GM12878 (cell line): ENCODE measurements at regions of chr9 and their contacts with region 1.

Region 1: DNA sequence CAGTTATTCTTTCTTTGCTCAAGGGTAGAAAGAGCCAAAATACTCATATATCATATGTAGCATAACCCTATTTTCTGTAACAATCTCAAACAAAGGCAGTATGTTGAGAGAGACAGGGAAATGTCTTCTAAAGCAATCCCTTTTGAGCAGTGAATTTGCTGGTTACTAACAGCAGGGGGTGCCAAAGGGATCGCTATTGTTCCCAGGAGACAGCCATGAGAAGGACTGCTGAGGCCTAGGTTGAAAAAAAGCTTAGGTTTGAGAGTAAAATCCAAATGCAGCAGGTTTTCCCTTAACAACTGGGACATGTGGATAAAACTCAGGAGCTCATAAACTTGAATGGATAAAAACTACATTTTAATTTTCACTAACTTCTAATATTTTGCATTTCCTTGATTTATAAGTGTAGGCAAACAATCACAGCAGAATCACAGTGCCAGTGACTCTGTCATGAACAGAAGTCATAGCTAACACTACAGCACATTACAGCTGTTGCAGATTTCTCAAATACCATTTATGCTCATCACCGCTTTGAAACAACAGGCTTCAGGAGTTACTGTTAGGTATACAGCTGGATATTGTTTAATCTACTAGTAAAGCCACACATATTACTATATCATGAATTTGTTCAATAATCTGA is 148.4 kb downstream of the MAPKAP1 start:
- DNase-seq: peak; percentile 33
- ATAC-seq: peak; percentile 79
- H3K4me3 ChIP-seq: no peak overlapping the region
- H3K27ac ChIP-seq: no peak overlapping the region; the same call in 1 of the 2 replicates
- H3K4me1 ChIP-seq: peaks cover 28% of the 10 kb centered on the region
- H3K27me3 ChIP-seq: no peaks in the 10 kb centered on the region
- CTCF ChIP-seq: peak; percentile 79 to 90 (median 86)
- EP300 ChIP-seq: no peak
- POLR2A ChIP-seq: no peak
- RAD21 ChIP-seq: peak; percentile 91

Region 2: DNA sequence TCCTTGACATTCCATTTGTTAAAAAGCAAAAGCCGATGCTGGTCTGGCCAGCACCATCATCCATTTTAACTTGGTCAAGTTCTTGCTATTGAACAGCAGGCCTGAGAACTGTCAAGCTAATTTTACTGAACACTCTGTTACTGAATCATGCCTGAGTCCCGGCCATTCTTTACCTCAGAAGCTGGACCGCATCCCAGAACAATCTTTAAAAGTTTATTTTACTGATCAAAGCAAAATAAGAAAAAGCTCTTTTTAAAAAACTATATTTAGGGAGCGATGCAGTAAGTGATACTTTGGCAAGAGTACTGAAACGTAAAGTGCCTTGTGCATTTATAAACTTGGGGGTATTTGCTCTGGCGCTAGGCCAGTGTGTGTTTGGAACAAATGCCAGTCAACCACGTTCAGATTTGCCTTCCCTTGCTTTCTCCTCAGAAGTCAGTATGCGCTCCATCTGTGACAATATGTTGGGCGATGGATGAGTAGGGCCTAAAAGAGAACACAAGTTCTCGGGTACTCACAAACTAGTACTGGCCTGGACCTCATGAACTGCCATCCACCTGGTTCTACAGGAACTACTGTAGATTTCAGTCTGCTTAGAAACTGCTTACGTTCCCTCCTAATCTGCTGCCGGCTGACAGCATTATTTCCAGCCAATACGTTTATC is 13.5 kb before region 1 on chr9:
- CTCF ChIA-PET with region 1: interaction called, 25 read pairs
- POLR2A ChIA-PET with region 1: no interaction called
- RAD21 ChIA-PET with region 1: interaction called, 3 read pairs
- SMC1A ChIA-PET with region 1: interaction called, 16 read pairs
- in situ Hi-C with region 1: no loop called
- intact Hi-C with region 1: no loop called
- DNase-seq: no peak
- ATAC-seq: no peak
- H3K4me3 ChIP-seq: no peak overlapping the region
- H3K27ac ChIP-seq: no peak overlapping the region
- H3K4me1 ChIP-seq: no peaks in the 10 kb centered on the region
- H3K27me3 ChIP-seq: no peaks in the 10 kb centered on the region
- CTCF ChIP-seq: no peak
- EP300 ChIP-seq: no peak
- POLR2A ChIP-seq: no peak
- RAD21 ChIP-seq: no peak

Region 3: DNA sequence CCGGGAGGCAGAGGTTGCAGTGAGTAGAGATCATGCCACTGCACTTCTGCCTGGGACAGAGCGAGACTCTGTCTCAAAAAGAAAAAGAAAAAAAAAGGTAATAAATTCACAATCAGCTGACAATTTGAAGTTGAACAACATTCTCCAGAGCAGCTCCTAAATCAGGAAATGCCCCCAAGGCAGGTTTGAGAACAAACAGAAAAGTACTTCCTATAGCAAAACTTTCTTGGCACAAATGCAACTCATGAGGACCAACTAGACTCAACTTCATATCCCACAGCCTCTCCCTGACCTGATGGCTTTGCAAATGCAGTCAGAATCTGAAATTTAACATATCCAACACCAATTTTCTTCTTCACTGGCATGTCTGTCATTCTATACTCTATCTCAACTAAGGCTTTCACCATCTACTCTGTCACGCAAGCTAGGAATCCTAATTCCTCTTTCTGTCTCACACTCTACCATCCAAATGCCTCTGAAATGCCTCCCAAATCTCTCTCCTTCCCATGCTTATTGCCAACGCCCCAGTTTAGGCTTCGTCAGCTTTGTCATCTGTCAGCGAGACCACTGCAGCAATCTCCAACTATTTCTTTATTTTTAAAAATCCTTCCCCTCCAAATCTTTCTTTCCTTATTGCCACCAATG is 35.1 kb after region 1 on chr9:
- CTCF ChIA-PET with region 1: interaction called, 10 read pairs
- POLR2A ChIA-PET with region 1: no interaction called
- RAD21 ChIA-PET with region 1: interaction called, 6 read pairs
- SMC1A ChIA-PET with region 1: interaction called, 8 read pairs
- in situ Hi-C with region 1: no loop called
- intact Hi-C with region 1: no loop called
- DNase-seq: no peak
- ATAC-seq: peak; percentile 33; the same call in 1 of the 3 replicates
- H3K4me3 ChIP-seq: no peak overlapping the region
- H3K27ac ChIP-seq: no peak overlapping the region
- H3K4me1 ChIP-seq: no peaks in the 10 kb centered on the region
- H3K27me3 ChIP-seq: no peaks in the 10 kb centered on the region
- CTCF ChIP-seq: no peak
- EP300 ChIP-seq: no peak
- POLR2A ChIP-seq: no peak
- RAD21 ChIP-seq: no peak

Region 4: GRCh38 chr9:125650271-125650737 is 91.7 kb after region 1 on chr9:
- CTCF ChIA-PET with region 1: interaction called, 16 read pairs
- POLR2A ChIA-PET with region 1: no interaction called
- RAD21 ChIA-PET with region 1: interaction called, 6 read pairs
- SMC1A ChIA-PET with region 1: interaction called, 8 read pairs
- in situ Hi-C with region 1: no loop called
- intact Hi-C with region 1: no loop called
- DNase-seq: peak; percentile 96
- ATAC-seq: peak; percentile 84
- H3K4me3 ChIP-seq: peak overlapping the region; percentile 53; the same call in 1 of the 2 replicates
- H3K27ac ChIP-seq: peak overlapping the region; percentile 95
- H3K4me1 ChIP-seq: peaks cover 59% of the 10 kb centered on the region
- H3K27me3 ChIP-seq: no peaks in the 10 kb centered on the region
- CTCF ChIP-seq: no peak
- EP300 ChIP-seq: peak; percentile 96 to 97
- POLR2A ChIP-seq: 0 out of 2 replicates have a peak, but pooled peaks have one; percentile 24
- RAD21 ChIP-seq: no peak

Region 5: DNA sequence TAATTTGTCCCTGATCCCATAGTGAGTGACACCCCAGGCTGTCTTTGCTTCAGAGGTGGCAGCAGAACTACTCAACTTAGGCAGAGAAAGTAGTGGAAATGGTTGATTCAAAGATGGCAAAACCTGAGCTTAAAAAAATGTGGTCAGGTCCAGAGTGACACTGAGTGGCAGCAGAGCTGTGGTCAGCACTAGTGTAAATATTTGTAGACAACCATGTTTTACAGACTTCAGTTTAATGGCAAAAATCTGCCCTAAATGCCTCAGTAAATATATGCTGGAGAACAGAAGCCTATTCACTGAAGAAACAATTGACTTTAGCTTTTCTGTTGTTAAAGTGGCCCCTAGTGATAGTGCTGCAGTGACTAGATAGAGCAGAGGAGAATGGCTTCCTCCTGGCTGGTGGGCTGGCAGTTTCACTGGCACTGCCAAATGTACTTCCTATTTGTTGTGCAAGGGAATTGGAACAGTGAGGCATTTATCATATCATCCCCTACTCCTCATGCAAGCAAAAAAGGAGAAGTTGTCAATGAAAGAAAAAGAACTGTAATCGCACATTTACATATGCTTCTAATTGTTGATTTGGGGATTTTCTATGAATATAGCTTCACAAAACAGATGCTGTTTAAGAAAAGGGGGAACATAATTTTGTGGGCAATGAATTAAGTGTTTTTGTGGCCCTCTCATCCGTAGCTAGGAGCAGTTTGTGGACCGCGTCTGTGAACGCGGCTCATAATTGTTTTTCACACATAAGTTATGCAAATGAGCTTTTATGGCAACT is 200.6 kb after region 1 on chr9:
- CTCF ChIA-PET with region 1: interaction called, 21 read pairs
- POLR2A ChIA-PET with region 1: interaction called, 8 read pairs
- RAD21 ChIA-PET with region 1: interaction called, 16 read pairs
- SMC1A ChIA-PET with region 1: interaction called, 12 read pairs
- in situ Hi-C with region 1: no loop called
- intact Hi-C with region 1: no loop called
- DNase-seq: no peak
- ATAC-seq: peak; percentile 53
- H3K4me3 ChIP-seq: peak overlapping the region; percentile 49
- H3K27ac ChIP-seq: peak overlapping the region; percentile 4; the same call in 1 of the 2 replicates
- H3K4me1 ChIP-seq: peaks cover 7% of the 10 kb centered on the region; the same call in 1 of the 2 replicates
- H3K27me3 ChIP-seq: no peaks in the 10 kb centered on the region
- CTCF ChIP-seq: no peak; a peak in 1 of 6 replicates
- EP300 ChIP-seq: no peak
- POLR2A ChIP-seq: no peak
- RAD21 ChIP-seq: no peak

Region 6: DNA sequence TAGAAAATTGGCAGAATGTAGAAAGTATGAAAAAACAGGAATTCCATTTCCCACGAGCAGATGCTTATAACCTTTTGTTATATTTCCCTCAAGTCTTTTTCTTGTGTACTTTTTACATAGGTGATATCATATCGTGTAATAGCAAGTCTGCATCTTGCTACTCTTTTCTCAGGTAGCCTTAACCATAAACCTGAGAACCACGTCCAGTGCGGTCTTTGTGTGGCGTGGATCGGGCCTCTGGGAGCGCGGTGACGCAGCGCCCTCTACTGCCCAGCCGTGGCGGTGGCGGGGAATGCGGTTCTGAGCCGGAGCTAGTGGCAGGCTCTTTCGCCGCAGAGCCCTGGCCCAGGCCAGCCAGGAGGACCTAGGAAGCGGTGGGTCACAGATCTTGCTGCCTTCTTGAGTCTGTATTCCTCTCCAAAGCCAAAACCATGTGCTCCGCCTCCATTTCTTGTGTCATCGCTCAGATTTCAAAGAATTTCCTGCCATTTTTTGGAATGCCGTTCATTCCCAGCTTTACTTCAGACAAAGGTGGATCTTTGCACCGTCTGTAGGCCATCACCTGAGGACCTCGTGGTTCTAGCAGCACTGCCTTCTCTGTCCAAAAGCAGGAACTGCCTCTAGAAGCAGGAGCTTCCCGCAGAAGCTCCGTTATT is 840.0 kb after region 1 on chr9:
- CTCF ChIA-PET with region 1: interaction called, 10 read pairs
- POLR2A ChIA-PET with region 1: no interaction called
- RAD21 ChIA-PET with region 1: interaction called, 4 read pairs
- SMC1A ChIA-PET with region 1: interaction called, 4 read pairs
- in situ Hi-C with region 1: no loop called
- intact Hi-C with region 1: no loop called
- DNase-seq: no peak
- ATAC-seq: peak; percentile 75
- H3K4me3 ChIP-seq: no peak overlapping the region
- H3K27ac ChIP-seq: no peak overlapping the region
- H3K4me1 ChIP-seq: peaks cover 5% of the 10 kb centered on the region
- H3K27me3 ChIP-seq: peaks cover 1 to 13% of the 10 kb centered on the region in 2 experiments
- CTCF ChIP-seq: peak; percentile 96 to 97 (median 96)
- EP300 ChIP-seq: no peak
- POLR2A ChIP-seq: no peak
- RAD21 ChIP-seq: peak; percentile 81